Posterior vena cava (tissue), 2 donors: ENCODE measurements at regions of chr10 and their contacts with region 1.

Region 1: GRCh38 chr10:93235686-93236085 is 162.0 kb downstream of the CYP26A1 start:
- DNase-seq: no peak

Region 2: GRCh38 chr10:93199191-93199751 is 36.4 kb before region 1 on chr10:
- intact Hi-C with region 1: loop called in 1 of 2 experiments (anchors 2 kb)
- DNase-seq: peak; percentile 91